H1 (cell line): ENCODE measurements at regions of chr6 and their contacts with region 1.

Region 1: GRCh38 chr6:160930547-160931377 is 60.8 kb upstream of the MAP3K4 start:
- DNase-seq: peak in 1 of 2 experiments; percentile 90
- H3K4me3 ChIP-seq: peak overlapping the region; percentile 17 to 77 (median 60)
- H3K27ac ChIP-seq: no peak overlapping the region
- H3K4me1 ChIP-seq: peaks cover 0 to 3% (median under 1%) of the 10 kb centered on the region in 4 experiments; a peak in 6 of 7 replicates
- H3K27me3 ChIP-seq: peaks cover 0 to 8% (median 6%) of the 10 kb centered on the region in 4 experiments; a peak in 3 of 7 replicates
- CTCF ChIP-seq: peak; percentile 78 to 98 (median 85)
- EP300 ChIP-seq: no peak
- POLR2A ChIP-seq: no peak
- RAD21 ChIP-seq: peak; percentile 85 to 88

Region 2: GRCh38 chr6:160837146-160837545 is 93.6 kb before region 1 on chr6:
- CTCF ChIA-PET with region 1: interaction called, 24 read pairs
- POLR2A ChIA-PET with region 1: no interaction called
- DNase-seq: no peak
- H3K4me3 ChIP-seq: no peak overlapping the region
- H3K27ac ChIP-seq: no peak overlapping the region
- H3K4me1 ChIP-seq: no peaks in the 10 kb centered on the region
- H3K27me3 ChIP-seq: no peaks in the 10 kb centered on the region
- CTCF ChIP-seq: no peak
- EP300 ChIP-seq: no peak
- POLR2A ChIP-seq: no peak
- RAD21 ChIP-seq: no peak

Region 3: DNA sequence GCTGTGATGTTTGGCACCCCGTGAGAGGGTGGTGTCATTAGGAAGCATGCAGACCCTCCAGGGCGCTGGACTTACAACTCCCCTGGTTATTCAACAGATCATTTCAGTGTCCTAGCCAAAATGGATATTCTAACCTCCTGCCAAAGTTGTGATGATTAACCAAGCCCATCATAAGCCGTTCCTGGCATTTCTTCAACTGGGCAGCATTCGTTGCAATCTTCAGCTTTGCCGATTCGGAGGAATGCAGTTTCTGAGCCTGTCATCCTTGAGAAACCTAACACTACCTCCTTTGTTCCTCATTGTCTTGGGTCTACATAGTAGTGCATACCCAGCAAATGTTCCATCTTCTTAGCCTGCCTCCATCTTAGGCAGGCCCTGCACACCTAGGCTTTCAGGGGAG is 18.4 kb before region 1 on chr6:
- CTCF ChIA-PET with region 1: interaction called, 29 read pairs
- POLR2A ChIA-PET with region 1: no interaction called
- DNase-seq: no peak
- H3K4me3 ChIP-seq: no peak overlapping the region
- H3K27ac ChIP-seq: no peak overlapping the region
- H3K4me1 ChIP-seq: no peaks in the 10 kb centered on the region
- H3K27me3 ChIP-seq: no peaks in the 10 kb centered on the region
- CTCF ChIP-seq: no peak
- EP300 ChIP-seq: no peak
- POLR2A ChIP-seq: no peak
- RAD21 ChIP-seq: no peak

Region 4: GRCh38 chr6:160919723-160920440 is 10.9 kb before region 1 on chr6:
- CTCF ChIA-PET with region 1: interaction called, 29 read pairs
- POLR2A ChIA-PET with region 1: no interaction called
- DNase-seq: no peak
- H3K4me3 ChIP-seq: no peak overlapping the region
- H3K27ac ChIP-seq: no peak overlapping the region
- H3K4me1 ChIP-seq: no peaks in the 10 kb centered on the region; a peak in 1 of 7 replicates
- H3K27me3 ChIP-seq: no peaks in the 10 kb centered on the region
- CTCF ChIP-seq: no peak
- EP300 ChIP-seq: no peak
- POLR2A ChIP-seq: no peak
- RAD21 ChIP-seq: no peak

Region 5: GRCh38 chr6:160945516-160946177 is 14.9 kb after region 1 on chr6:
- CTCF ChIA-PET with region 1: interaction called, 14 read pairs
- POLR2A ChIA-PET with region 1: no interaction called
- DNase-seq: no peak
- H3K4me3 ChIP-seq: no peak overlapping the region
- H3K27ac ChIP-seq: no peak overlapping the region
- H3K4me1 ChIP-seq: no peaks in the 10 kb centered on the region
- H3K27me3 ChIP-seq: no peaks in the 10 kb centered on the region
- CTCF ChIP-seq: no peak
- EP300 ChIP-seq: no peak
- POLR2A ChIP-seq: no peak
- RAD21 ChIP-seq: no peak

Region 6: DNA sequence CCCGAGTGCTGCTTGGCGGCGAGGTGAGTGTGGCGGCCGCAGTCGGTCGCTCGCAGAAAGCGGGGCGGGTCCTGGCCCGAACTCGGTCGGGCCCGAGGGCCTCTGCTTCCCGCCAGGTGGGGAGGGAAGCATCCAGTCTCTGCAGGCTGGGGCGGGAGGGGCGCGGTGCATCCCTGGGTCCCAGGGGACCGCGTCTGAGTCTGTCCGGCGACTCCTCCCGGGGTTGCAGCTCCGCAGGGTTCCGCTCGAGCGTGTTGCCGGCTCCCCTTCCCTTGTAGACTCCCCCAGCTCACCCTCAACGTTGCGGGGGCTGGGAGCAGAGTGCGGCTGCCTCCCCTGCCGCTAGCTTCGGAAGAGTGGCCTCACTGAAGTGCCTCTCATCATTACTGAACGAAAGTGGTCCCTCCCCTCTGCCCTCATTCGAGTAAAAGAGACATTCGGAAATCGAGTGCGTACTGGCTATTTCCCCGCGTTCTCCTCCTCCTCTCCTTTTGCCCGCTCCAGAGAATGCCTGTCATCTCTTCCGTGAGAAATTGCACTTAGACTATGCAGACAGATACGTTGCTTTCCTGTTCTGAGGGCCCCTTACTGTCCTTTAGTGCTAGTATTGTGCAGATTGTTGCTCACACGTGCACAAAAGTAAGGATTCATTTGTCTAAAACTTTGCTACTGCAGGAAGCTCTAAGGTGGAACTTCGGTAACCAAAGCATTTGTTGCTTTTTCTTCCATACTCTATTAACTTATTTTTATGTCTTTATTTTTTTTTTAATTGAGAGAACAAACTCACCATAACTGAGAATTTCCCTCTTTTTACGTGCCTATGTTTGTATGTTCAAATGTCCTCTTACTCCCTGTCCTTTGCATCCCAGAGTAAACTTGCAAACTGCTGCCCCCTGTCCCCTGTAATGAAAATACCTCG is 61.6 kb after region 1 on chr6:
- CTCF ChIA-PET with region 1: interaction called, 14 read pairs
- POLR2A ChIA-PET with region 1: interaction called, 7 read pairs
- DNase-seq: peak in 1 of 2 experiments; percentile 71
- H3K4me3 ChIP-seq: peak overlapping the region; percentile 80 to 91 (median 86)
- H3K27ac ChIP-seq: peak overlapping the region; percentile 81
- H3K4me1 ChIP-seq: peaks cover 0 to 6% (median 0%) of the 10 kb centered on the region in 4 experiments; a peak in 1 of 7 replicates
- H3K27me3 ChIP-seq: no peaks in the 10 kb centered on the region; a peak in 1 of 7 replicates
- CTCF ChIP-seq: peak; percentile 10 to 67 (median 55)
- EP300 ChIP-seq: no peak
- POLR2A ChIP-seq: peak in 1 of 2 experiments; percentile 68; a peak in 2 of 3 replicates
- RAD21 ChIP-seq: peak; percentile 67 to 70

Region 7: GRCh38 chr6:161101517-161101916 is 170.8 kb after region 1 on chr6:
- CTCF ChIA-PET with region 1: interaction called, 13 read pairs
- POLR2A ChIA-PET with region 1: no interaction called
- DNase-seq: no peak
- H3K4me3 ChIP-seq: no peak overlapping the region
- H3K27ac ChIP-seq: no peak overlapping the region
- H3K4me1 ChIP-seq: no peaks in the 10 kb centered on the region
- H3K27me3 ChIP-seq: no peaks in the 10 kb centered on the region
- CTCF ChIP-seq: peak; percentile 44 to 54 (median 47)
- EP300 ChIP-seq: no peak
- POLR2A ChIP-seq: no peak
- RAD21 ChIP-seq: peak; percentile 60 to 73